ENCODE measurements at regions of chr13 and their contacts with region 1.

Region 1: DNA sequence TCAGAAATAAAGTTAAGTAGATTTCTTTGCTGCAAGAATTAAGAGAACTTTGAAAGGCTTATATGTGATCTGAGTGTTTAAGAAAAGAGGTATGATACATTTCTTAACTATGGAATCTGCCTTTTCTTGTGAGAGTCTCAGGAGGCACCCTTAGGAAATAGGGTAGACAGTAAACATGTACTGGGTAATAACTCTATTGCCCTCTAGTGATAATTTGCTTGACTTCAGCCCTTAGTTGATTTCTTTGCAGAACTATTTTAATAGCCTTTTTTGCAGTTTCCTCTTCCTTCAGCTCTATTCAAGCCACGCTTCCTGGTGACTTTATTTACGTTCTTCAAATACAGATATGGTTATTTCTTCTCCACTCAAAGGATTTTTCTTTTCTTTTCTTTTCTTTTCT is 37.0 kb upstream of the CCNA1 start:
- DNase-seq: peak; percentile 5
- ATAC-seq: peak; percentile 66
- H3K4me3 ChIP-seq: no peak overlapping the region
- H3K27ac ChIP-seq: no peak overlapping the region
- H3K4me1 ChIP-seq: no peaks in the 10 kb centered on the region
- H3K27me3 ChIP-seq: no peaks in the 10 kb centered on the region
- CTCF ChIP-seq: peak; percentile 41
- EP300 ChIP-seq: no peak
- POLR2A ChIP-seq: no peak
- RAD21 ChIP-seq: no peak

Region 2: GRCh38 chr13:36282818-36283445 is 112.3 kb before region 1 on chr13:
- CTCF ChIA-PET with region 1: interaction called, 12 read pairs
- POLR2A ChIA-PET with region 1: no interaction called
- in situ Hi-C with region 1: no loop called
- intact Hi-C with region 1: loop called (anchors 5 kb)
- DNase-seq: peak; percentile 17
- ATAC-seq: peak; percentile 62
- H3K4me3 ChIP-seq: no peak overlapping the region
- H3K27ac ChIP-seq: no peak overlapping the region
- H3K4me1 ChIP-seq: no peaks in the 10 kb centered on the region
- H3K27me3 ChIP-seq: no peaks in the 10 kb centered on the region
- CTCF ChIP-seq: peak; percentile 69
- EP300 ChIP-seq: no peak
- POLR2A ChIP-seq: no peak
- RAD21 ChIP-seq: 0 out of 2 replicates have a peak, but pooled peaks have one; percentile 42

Region 3: GRCh38 chr13:36346222-36347083 is 48.8 kb before region 1 on chr13 and contains the start of gene SPART:
- CTCF ChIA-PET with region 1: interaction called, 3 read pairs
- POLR2A ChIA-PET with region 1: no interaction called
- in situ Hi-C with region 1: no loop called
- intact Hi-C with region 1: loop called (anchors 1 kb)
- DNase-seq: peak; percentile 72
- ATAC-seq: peak; percentile 96
- H3K4me3 ChIP-seq: peak within 1 kb of the TSS; percentile 58 to 75 (median 66); a peak in 5 of 6 replicates
- H3K27ac ChIP-seq: peak within 1 kb of the TSS; percentile 77
- H3K4me1 ChIP-seq: peaks cover 23% of the 10 kb centered on the region
- H3K27me3 ChIP-seq: no peaks in the 10 kb centered on the region
- CTCF ChIP-seq: peak; percentile 95
- EP300 ChIP-seq: no peak
- POLR2A ChIP-seq: peak in 1 of 2 experiments; percentile 37; a peak in 2 of 4 replicates
- RAD21 ChIP-seq: peak; percentile 65; the same call in 1 of the 2 replicates
- total RNA-seq, gene SPART: 28.8 and 48.6 TPM in 2 replicates

Measured in HepG2 (cell line).